Calu3 (cell line): ENCODE measurements at regions of chr1 and their contacts with region 1.

Region 1: GRCh38 chr1:50368179-50369012 is 54.8 kb downstream of the DMRTA2 start:
- DNase-seq: peak; percentile 69
- H3K4me3 Mint-ChIP-seq: no peak overlapping the region
- H3K27ac Mint-ChIP-seq: no peak overlapping the region
- H3K4me1 Mint-ChIP-seq: no peaks in the 10 kb centered on the region
- H3K27me3 Mint-ChIP-seq: peaks cover 70% of the 10 kb centered on the region
- CTCF ChIP-seq: peak; percentile 89

Region 2: DNA sequence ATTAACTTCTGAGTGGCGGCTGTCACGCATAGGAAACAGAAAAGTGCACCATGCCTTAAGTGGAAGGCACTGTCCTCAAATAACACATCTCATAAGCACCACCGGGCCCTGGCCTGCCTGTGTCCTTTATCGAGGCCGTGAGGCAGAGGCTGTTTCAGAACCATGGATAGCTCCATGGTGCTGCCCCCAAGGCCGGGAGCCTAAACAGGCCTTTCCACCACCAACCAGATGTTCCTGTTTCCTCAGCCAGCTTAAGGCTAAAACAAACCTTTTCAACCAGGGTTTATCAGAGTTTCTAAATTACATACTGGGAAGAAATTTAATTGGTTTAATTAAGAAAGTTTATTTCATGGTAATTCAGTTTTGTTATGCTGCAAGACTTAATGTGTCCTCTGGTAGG is 59.5 kb before region 1 on chr1:
- CTCF ChIA-PET with region 1: no interaction called
- intact Hi-C with region 1: no loop called
- DNase-seq: peak; percentile 49
- H3K4me3 Mint-ChIP-seq: no peak overlapping the region
- H3K27ac Mint-ChIP-seq: no peak overlapping the region
- H3K4me1 Mint-ChIP-seq: no peaks in the 10 kb centered on the region
- H3K27me3 Mint-ChIP-seq: peaks cover 92% of the 10 kb centered on the region
- CTCF ChIP-seq: no peak

Region 3: DNA sequence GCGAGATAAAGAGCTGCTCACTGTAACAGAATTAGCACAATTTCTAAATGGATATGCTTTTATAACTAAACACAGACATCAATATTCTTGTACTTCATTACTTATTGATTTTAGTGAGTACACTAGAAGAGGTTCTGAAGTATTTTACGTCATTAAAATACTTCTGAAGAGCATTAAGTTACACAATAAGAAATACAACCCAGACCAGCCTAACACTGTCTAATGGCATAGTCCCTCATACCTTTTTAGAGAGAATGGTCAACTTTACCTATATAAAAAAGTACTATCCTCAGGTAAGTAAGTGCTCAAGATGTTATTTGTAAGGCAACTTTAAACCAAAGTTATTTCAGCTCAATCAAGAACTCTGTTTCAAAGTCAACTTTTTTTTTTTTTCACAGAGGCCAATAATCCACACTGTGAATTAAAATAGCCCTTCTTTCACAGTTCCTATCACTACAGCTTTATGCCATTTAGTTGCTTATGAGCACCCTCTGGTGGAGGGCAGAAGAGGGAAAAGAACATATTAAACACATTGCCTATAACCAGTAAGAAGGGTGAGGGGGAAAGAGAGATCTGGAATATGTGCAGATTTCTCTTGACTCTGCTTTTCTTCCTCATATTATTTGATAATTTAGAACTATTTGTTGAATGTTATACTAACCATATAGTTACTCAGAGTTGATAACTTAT is 236.9 kb after region 1 on chr1:
- CTCF ChIA-PET with region 1: interaction called, 9 read pairs
- intact Hi-C with region 1: loop called (anchors 1 kb)
- DNase-seq: peak; percentile 65
- H3K4me3 Mint-ChIP-seq: no peak overlapping the region
- H3K27ac Mint-ChIP-seq: no peak overlapping the region
- H3K4me1 Mint-ChIP-seq: peaks cover 18% of the 10 kb centered on the region
- H3K27me3 Mint-ChIP-seq: no peaks in the 10 kb centered on the region
- CTCF ChIP-seq: peak; percentile 43

Region 4: DNA sequence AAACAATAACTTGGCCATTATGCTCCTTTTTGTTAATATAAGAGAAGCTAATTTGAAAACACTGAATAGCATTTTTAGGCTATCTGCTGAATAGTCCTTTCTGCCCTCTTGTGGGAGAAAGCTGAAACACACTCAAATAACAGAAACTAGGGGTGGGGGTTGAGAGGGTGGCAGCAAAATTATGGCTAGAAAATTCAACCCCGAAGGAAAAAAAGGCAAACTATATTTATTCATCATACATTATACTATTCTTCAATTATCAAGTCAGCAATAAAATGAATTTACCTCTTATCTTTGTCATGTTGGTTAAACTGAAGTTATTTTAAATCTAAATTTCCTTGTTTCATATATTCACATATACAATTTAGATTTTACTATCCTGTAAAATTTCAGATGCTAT is 335.7 kb after region 1 on chr1:
- CTCF ChIA-PET with region 1: no interaction called
- intact Hi-C with region 1: loop called (anchors 2 kb)
- DNase-seq: peak; percentile 43
- H3K4me3 Mint-ChIP-seq: no peak overlapping the region
- H3K27ac Mint-ChIP-seq: no peak overlapping the region
- H3K4me1 Mint-ChIP-seq: no peaks in the 10 kb centered on the region
- H3K27me3 Mint-ChIP-seq: no peaks in the 10 kb centered on the region
- CTCF ChIP-seq: peak; percentile 78

Region 5: DNA sequence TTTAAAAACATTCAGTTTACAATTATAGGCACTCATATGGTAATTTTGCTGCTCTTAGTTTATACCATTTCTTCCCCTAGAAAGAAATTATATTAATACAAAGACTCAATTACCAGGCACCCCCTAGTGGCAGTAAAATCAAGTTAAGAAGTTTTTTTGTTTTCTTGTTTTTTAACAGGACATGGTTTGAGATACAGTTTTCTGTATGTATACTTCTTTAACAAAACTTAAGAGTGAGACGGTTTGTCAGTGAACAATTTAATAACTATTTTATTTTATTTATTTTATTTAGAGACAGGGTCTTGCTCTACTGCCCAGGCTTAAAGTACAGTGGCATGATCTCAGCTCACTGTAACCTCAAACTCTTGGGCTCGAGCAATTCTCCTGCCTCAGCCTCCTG is 367.0 kb after region 1 on chr1:
- CTCF ChIA-PET with region 1: no interaction called
- intact Hi-C with region 1: loop called (anchors 2 kb)
- DNase-seq: no peak
- H3K4me3 Mint-ChIP-seq: no peak overlapping the region
- H3K27ac Mint-ChIP-seq: no peak overlapping the region
- H3K4me1 Mint-ChIP-seq: peaks cover 10% of the 10 kb centered on the region
- H3K27me3 Mint-ChIP-seq: no peaks in the 10 kb centered on the region
- CTCF ChIP-seq: peak; percentile 52

Region 6: DNA sequence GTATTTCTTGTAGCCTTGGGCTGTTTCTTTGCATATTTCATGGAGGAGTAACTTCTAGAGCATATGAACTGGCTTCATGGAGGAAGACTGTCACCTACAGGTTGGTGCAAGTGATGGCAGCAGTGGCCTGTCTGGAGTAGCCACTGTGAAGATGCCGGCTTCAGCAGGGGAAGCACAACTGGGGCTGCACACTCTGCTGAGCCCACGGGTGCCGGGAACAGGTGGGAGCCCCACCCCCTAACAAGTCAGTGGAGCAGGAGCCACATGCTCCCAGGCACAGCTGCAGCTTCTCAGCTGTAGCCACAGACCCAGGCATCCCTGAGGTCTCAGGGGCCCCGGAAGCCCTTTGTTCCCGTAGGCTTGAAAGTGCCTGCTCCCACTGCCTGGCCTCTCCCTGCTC is 690.5 kb after region 1 on chr1:
- CTCF ChIA-PET with region 1: interaction called, 3 read pairs
- intact Hi-C with region 1: loop called (anchors 10 kb)
- DNase-seq: peak; percentile 19
- H3K4me3 Mint-ChIP-seq: no peak overlapping the region
- H3K27ac Mint-ChIP-seq: no peak overlapping the region
- H3K4me1 Mint-ChIP-seq: peaks cover 32% of the 10 kb centered on the region
- H3K27me3 Mint-ChIP-seq: no peaks in the 10 kb centered on the region
- CTCF ChIP-seq: peak; percentile 54